ENCODE measurements at regions of chr5 and their contacts with region 1.

Region 1: DNA sequence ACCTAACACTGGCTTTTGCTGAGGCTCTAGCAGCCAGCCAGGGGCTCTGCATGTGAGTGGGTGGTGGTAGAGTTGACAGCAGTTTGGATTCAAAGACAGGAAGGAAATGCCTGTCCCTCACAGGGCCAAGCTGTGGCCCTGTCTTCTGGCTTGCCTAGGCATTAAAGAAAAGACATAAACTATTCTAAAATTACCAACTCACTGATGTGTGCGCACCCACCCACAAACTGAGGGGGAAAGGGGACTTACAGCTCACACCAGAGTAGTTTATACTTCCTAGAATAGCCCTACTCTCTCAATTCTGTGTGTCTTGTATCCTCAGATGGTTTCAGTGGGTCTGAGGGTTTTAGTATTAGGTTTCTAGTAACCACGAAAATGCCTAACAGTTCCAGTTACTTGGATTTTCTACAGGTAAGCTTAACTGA is 18.3 kb upstream of the IL13 start:
- DNase-seq: no peak
- ATAC-seq: no peak
- H3K4me3 ChIP-seq: no peak overlapping the region
- H3K4me3 Mint-ChIP-seq: peak overlapping the region in 1 of 10 donors; percentile 55
- H3K27ac ChIP-seq: no peak overlapping the region
- H3K27ac Mint-ChIP-seq: peak overlapping the region in 2 of 9 donors; percentile 32 to 64
- H3K4me1 ChIP-seq: no peaks in the 10 kb centered on the region
- H3K4me1 Mint-ChIP-seq: peaks cover 0 to 87% (median 0%) of the 10 kb centered on the region in 7 donors
- H3K27me3 ChIP-seq: no peaks in the 10 kb centered on the region
- H3K27me3 Mint-ChIP-seq: no peaks in the 10 kb centered on the region

Region 2: GRCh38 chr5:132386644-132387286 is 253.0 kb before region 1 on chr5:
- CTCF ChIA-PET with region 1: no interaction called
- POLR2A ChIA-PET with region 1: no interaction called
- intact Hi-C with region 1: no loop called
- DNase-seq: peak; percentile 60 to 81 (median 74)
- ATAC-seq: peak; percentile 88
- H3K4me3 ChIP-seq: no peak overlapping the region
- H3K4me3 Mint-ChIP-seq: peak overlapping the region in 3 of 10 donors; percentile 7 to 47 (median 22)
- H3K27ac ChIP-seq: no peak overlapping the region
- H3K27ac Mint-ChIP-seq: peak overlapping the region; percentile 1 to 83 (median 41)
- H3K4me1 ChIP-seq: peaks cover 15 to 19% of the 10 kb centered on the region in 2 donors
- H3K4me1 Mint-ChIP-seq: peaks cover 20 to 55% (median 29%) of the 10 kb centered on the region in 7 donors
- H3K27me3 ChIP-seq: no peaks in the 10 kb centered on the region
- H3K27me3 Mint-ChIP-seq: no peaks in the 10 kb centered on the region

Region 3: GRCh38 chr5:132406144-132406783 is 233.5 kb before region 1 on chr5:
- CTCF ChIA-PET with region 1: no interaction called
- POLR2A ChIA-PET with region 1: no interaction called
- intact Hi-C with region 1: no loop called
- DNase-seq: no peak
- ATAC-seq: no peak
- H3K4me3 ChIP-seq: no peak overlapping the region
- H3K4me3 Mint-ChIP-seq: peak overlapping the region in 7 of 10 donors; percentile 5 to 97 (median 40)
- H3K27ac ChIP-seq: peak overlapping the region; percentile 39
- H3K27ac Mint-ChIP-seq: peak overlapping the region in 8 of 9 donors; percentile 93 to 99 (median 96)
- H3K4me1 ChIP-seq: peaks cover 42 to 49% of the 10 kb centered on the region in 2 donors
- H3K4me1 Mint-ChIP-seq: peaks cover 38 to 77% (median 75%) of the 10 kb centered on the region in 7 donors
- H3K27me3 ChIP-seq: no peaks in the 10 kb centered on the region
- H3K27me3 Mint-ChIP-seq: peaks cover 0 to 18% (median 0%) of the 10 kb centered on the region in 5 donors

Region 4: DNA sequence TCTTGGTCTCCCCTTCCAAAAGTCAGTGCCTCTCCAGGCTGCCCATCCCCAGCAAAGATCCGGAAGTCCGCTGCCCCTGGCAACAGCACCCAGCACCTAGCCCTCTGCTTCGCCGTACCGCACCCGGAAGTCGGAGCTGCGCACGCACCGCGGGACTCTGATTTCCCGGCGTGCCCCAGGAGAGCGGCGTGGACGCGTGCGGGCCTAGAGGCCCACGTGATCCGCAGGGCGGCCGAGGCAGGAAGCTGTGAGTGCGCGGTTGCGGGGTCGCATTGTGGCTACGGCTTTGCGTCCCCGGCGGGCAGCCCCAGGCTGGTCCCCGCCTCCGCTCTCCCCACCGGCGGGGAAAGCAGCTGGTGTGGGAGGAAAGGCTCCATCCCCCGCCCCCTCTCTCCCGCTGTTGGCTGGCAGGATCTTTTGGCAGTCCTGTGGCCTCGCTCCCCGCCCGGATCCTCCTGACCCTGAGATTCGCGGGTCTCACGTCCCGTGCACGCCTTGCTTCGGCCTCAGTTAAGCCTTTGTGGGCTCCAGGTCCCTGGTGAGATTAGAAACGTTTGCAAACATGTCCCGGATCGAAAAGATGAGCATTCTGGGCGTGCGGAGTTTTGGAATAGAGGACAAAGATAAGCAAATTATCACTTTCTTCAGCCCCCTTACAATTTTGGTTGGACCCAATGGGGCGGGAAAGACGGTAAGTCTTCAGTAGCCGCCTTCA is 82.8 kb before region 1 on chr5 and contains the start of gene RAD50:
- CTCF ChIA-PET with region 1: no interaction called
- POLR2A ChIA-PET with region 1: no interaction called
- intact Hi-C with region 1: loop called in 1 of 2 experiments (anchors 5 kb)
- DNase-seq: peak; percentile 81 to 92 (median 90)
- ATAC-seq: peak; percentile 97
- H3K4me3 ChIP-seq: peak within 1 kb of the TSS; percentile 78
- H3K4me3 Mint-ChIP-seq: peak within 1 kb of the TSS; percentile 90 to 99 (median 96)
- H3K27ac ChIP-seq: peak within 1 kb of the TSS; percentile 76
- H3K27ac Mint-ChIP-seq: peak within 1 kb of the TSS; percentile 90 to 98 (median 97)
- H3K4me1 ChIP-seq: peaks cover 5 to 14% of the 10 kb centered on the region in 2 donors
- H3K4me1 Mint-ChIP-seq: peaks cover 10 to 37% (median 29%) of the 10 kb centered on the region in 7 donors
- H3K27me3 ChIP-seq: no peaks in the 10 kb centered on the region
- H3K27me3 Mint-ChIP-seq: no peaks in the 10 kb centered on the region
- total RNA-seq, gene RAD50: 18.0 to 35.4 (median 32.2) TPM

Region 5: GRCh38 chr5:132655821-132656773 is 16.4 kb after region 1 on chr5:
- CTCF ChIA-PET with region 1: no interaction called
- POLR2A ChIA-PET with region 1: no interaction called
- intact Hi-C with region 1: loop called in 1 of 2 experiments (anchors 2 kb)
- DNase-seq: peak in 4 of 9 donors; percentile 1 to 76 (median 10)
- ATAC-seq: peak; percentile 64
- H3K4me3 ChIP-seq: peak overlapping the region; percentile 42
- H3K4me3 Mint-ChIP-seq: peak overlapping the region in 9 of 10 donors; percentile 16 to 78 (median 61)
- H3K27ac ChIP-seq: no peak overlapping the region
- H3K27ac Mint-ChIP-seq: peak overlapping the region in 2 of 9 donors; percentile 62 to 82
- H3K4me1 ChIP-seq: peaks cover 9 to 13% of the 10 kb centered on the region in 2 donors
- H3K4me1 Mint-ChIP-seq: peaks cover 0 to 34% (median 8%) of the 10 kb centered on the region in 7 donors
- H3K27me3 ChIP-seq: peaks cover 0 to 5% of the 10 kb centered on the region in 2 donors
- H3K27me3 Mint-ChIP-seq: peaks cover 15 to 51% (median 46%) of the 10 kb centered on the region in 5 donors

Region 6: GRCh38 chr5:132820162-132820754 is 180.5 kb after region 1 on chr5:
- CTCF ChIA-PET with region 1: no interaction called
- POLR2A ChIA-PET with region 1: no interaction called
- intact Hi-C with region 1: loop called in 1 of 2 experiments (anchors 5 kb)
- DNase-seq: peak; percentile 60 to 86 (median 75)
- ATAC-seq: peak; percentile 93
- H3K4me3 ChIP-seq: peak overlapping the region; percentile 34
- H3K4me3 Mint-ChIP-seq: peak overlapping the region; percentile 5 to 86 (median 72)
- H3K27ac ChIP-seq: no peak overlapping the region
- H3K27ac Mint-ChIP-seq: peak overlapping the region in 2 of 9 donors; percentile 16 to 33
- H3K4me1 ChIP-seq: peaks cover 0 to 6% of the 10 kb centered on the region in 2 donors
- H3K4me1 Mint-ChIP-seq: peaks cover 6 to 18% (median 10%) of the 10 kb centered on the region in 7 donors
- H3K27me3 ChIP-seq: peaks cover 3 to 14% of the 10 kb centered on the region in 2 donors
- H3K27me3 Mint-ChIP-seq: peaks cover 13 to 51% (median 23%) of the 10 kb centered on the region in 5 donors

Measured in naive thymus-derived CD4-positive, alpha-beta T cell (primary cell).